Activated T-helper 2 cell treated with anti-CD3 and anti-CD28 coated beads, Interferon-gamma antibody, Interleukin-2, Interleukin-4, amounts not matched to agents 10 μg/mL and 5 μg/mL and 100 μg/mL, durations not matched to agents 14 hours and 24 hours and 36 hours (primary cell): ENCODE measurements at regions of chr7 and their contacts with region 1.

Region 1: GRCh38 chr7:12322284-12322902 is 81.3 kb downstream of the VWDE start:
- DNase-seq: no peak
- H3K4me3 Mint-ChIP-seq: no peak overlapping the region
- H3K27ac Mint-ChIP-seq: no peak overlapping the region
- H3K4me1 Mint-ChIP-seq: no peaks in the 10 kb centered on the region
- H3K27me3 Mint-ChIP-seq: no peaks in the 10 kb centered on the region

Region 2: GRCh38 chr7:11427686-11428273 is 894.6 kb before region 1 on chr7:
- intact Hi-C with region 1: loop called (anchors 5 kb)
- DNase-seq: no peak
- H3K4me3 Mint-ChIP-seq: no peak overlapping the region
- H3K27ac Mint-ChIP-seq: no peak overlapping the region
- H3K4me1 Mint-ChIP-seq: no peaks in the 10 kb centered on the region
- H3K27me3 Mint-ChIP-seq: no peaks in the 10 kb centered on the region

Region 3: DNA sequence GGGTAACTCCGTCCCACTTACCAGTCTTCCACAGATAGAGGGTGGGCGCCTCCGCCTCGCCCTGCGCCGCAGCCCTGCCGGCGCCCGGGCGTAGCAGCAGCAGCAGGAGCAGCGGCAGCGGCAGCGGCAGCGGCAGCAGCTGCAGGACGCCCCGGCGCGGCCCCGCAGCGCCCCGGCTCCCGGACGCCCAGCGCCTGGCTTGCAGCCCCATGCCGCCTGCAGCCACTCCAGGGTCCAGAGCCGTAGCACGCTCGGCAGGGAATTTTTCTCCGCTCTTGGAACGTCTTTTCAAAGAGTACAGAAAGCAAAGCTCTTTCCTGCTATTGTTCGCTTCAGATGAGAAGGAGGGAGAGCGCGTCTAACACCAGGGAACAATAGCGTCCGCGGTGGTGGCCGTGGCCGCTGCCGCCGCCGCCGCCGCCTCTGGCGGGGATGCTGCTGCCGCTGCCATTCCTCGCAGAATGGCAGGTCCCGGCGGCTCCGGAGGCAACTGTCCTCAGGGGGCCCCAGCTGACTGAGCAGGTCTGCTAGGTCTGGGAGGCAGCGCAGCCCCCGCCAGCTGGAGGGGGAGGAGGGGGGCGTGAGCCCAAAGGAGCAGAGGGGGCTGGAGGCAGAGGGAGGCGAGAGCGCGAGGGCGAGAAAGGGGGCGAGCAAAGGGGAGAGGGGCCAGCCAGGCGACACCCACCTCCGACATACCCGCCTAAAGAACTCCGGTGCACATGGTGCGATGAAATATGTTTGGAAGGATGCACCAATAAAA is 490.5 kb before region 1 on chr7 and contains the start of gene THSD7A:
- intact Hi-C with region 1: loop called (anchors 10 kb)
- DNase-seq: no peak
- H3K4me3 Mint-ChIP-seq: no peak within 1 kb of the TSS
- H3K27ac Mint-ChIP-seq: no peak within 1 kb of the TSS
- H3K4me1 Mint-ChIP-seq: peaks cover 6% of the 10 kb centered on the region
- H3K27me3 Mint-ChIP-seq: peaks cover 31% of the 10 kb centered on the region
- total RNA-seq, gene THSD7A: not detected in 2 replicates

Region 4: GRCh38 chr7:12211054-12211710 is 111.2 kb before region 1 on chr7 and contains the start of gene TMEM106B:
- intact Hi-C with region 1: loop called (anchors 2 kb)
- DNase-seq: peak; percentile 95
- H3K4me3 Mint-ChIP-seq: peak within 1 kb of the TSS; percentile 97
- H3K27ac Mint-ChIP-seq: peak within 1 kb of the TSS; percentile 90
- H3K4me1 Mint-ChIP-seq: peaks cover 31% of the 10 kb centered on the region
- H3K27me3 Mint-ChIP-seq: peaks cover 13% of the 10 kb centered on the region
- total RNA-seq, gene TMEM106B: 23.9 and 24.1 TPM in 2 replicates

Region 5: DNA sequence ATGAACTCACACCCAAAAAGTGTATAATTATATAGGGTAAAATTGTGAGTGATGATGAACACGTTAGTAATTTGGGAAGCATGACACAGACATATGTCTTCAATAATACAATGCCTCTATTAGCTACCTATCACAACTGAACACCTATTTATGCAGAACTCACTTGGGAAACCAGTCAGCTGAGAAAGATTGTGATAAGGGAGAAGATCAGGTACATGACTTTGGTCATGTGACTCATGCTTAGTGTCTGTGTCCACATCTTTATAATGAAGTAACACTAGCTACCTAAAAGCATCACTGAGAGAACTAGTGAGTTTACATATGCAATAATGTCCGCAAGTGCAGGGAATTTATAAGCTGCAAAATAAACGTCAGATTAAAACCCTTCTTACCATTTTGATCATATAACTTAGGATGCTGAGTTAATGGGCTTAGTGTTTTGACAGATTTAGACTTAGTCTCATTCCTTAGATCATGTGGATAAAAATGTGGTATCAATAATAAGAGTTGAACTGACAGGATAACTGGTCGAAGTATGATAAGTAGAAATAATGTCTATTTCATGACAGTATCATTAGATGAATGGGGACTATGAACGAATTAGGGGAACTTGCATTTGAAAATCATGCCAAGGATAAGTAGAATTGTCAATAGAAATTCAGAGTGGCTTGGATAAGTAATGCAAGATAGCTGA is 69.7 kb after region 1 on chr7:
- intact Hi-C with region 1: no loop called
- DNase-seq: no peak
- H3K4me3 Mint-ChIP-seq: no peak overlapping the region
- H3K27ac Mint-ChIP-seq: no peak overlapping the region
- H3K4me1 Mint-ChIP-seq: no peaks in the 10 kb centered on the region
- H3K27me3 Mint-ChIP-seq: no peaks in the 10 kb centered on the region